Breast epithelium (tissue), 4 donors: ENCODE measurements at regions of chr19 and their contacts with region 1.

Region 1: GRCh38 chr19:7562646-7563393 is 27.3 kb downstream of the PNPLA6 start:
- DNase-seq: no peak
- H3K4me3 ChIP-seq: no peak overlapping the region
- H3K27ac ChIP-seq: no peak overlapping the region
- H3K4me1 ChIP-seq: no peaks in the 10 kb centered on the region
- H3K27me3 ChIP-seq: no peaks in the 10 kb centered on the region
- CTCF ChIP-seq: no peak
- POLR2A ChIP-seq: no peak

Region 2: GRCh38 chr19:7674010-7675005 is 111.5 kb after region 1 on chr19:
- intact Hi-C with region 1: loop called (anchors 10 kb)
- DNase-seq: no peak
- H3K4me3 ChIP-seq: no peak overlapping the region
- H3K27ac ChIP-seq: no peak overlapping the region
- H3K4me1 ChIP-seq: no peaks in the 10 kb centered on the region
- H3K27me3 ChIP-seq: peaks cover 0 to 58% of the 10 kb centered on the region in 2 donors
- CTCF ChIP-seq: no peak
- POLR2A ChIP-seq: no peak

Region 3: GRCh38 chr19:7799640-7800355 is 237.0 kb after region 1 on chr19:
- intact Hi-C with region 1: loop called (anchors 5 kb)
- DNase-seq: peak in 1 of 2 donors; percentile 59
- H3K4me3 ChIP-seq: peak overlapping the region; percentile 0 to 52 (median 26)
- H3K27ac ChIP-seq: no peak overlapping the region
- H3K4me1 ChIP-seq: peaks cover 0 to 4% of the 10 kb centered on the region in 2 donors
- H3K27me3 ChIP-seq: peaks cover 0 to 12% of the 10 kb centered on the region in 2 donors
- CTCF ChIP-seq: peak; percentile 36 to 80 (median 60)
- POLR2A ChIP-seq: no peak

Region 4: GRCh38 chr19:8451885-8452284 is 889.1 kb after region 1 on chr19:
- intact Hi-C with region 1: loop called (anchors 5 kb)
- DNase-seq: no peak
- H3K4me3 ChIP-seq: no peak overlapping the region
- H3K27ac ChIP-seq: no peak overlapping the region
- H3K4me1 ChIP-seq: peaks cover 6 to 43% of the 10 kb centered on the region in 2 donors
- H3K27me3 ChIP-seq: no peaks in the 10 kb centered on the region
- CTCF ChIP-seq: no peak
- POLR2A ChIP-seq: no peak

Region 5: GRCh38 chr19:9070066-9070465 is 1507.2 kb after region 1 on chr19:
- intact Hi-C with region 1: no loop called
- DNase-seq: no peak
- H3K4me3 ChIP-seq: no peak overlapping the region
- H3K27ac ChIP-seq: no peak overlapping the region
- H3K4me1 ChIP-seq: no peaks in the 10 kb centered on the region
- H3K27me3 ChIP-seq: no peaks in the 10 kb centered on the region
- CTCF ChIP-seq: no peak
- POLR2A ChIP-seq: no peak